ENCODE measurements at regions of chr21 and their contacts with region 1.

Region 1: DNA sequence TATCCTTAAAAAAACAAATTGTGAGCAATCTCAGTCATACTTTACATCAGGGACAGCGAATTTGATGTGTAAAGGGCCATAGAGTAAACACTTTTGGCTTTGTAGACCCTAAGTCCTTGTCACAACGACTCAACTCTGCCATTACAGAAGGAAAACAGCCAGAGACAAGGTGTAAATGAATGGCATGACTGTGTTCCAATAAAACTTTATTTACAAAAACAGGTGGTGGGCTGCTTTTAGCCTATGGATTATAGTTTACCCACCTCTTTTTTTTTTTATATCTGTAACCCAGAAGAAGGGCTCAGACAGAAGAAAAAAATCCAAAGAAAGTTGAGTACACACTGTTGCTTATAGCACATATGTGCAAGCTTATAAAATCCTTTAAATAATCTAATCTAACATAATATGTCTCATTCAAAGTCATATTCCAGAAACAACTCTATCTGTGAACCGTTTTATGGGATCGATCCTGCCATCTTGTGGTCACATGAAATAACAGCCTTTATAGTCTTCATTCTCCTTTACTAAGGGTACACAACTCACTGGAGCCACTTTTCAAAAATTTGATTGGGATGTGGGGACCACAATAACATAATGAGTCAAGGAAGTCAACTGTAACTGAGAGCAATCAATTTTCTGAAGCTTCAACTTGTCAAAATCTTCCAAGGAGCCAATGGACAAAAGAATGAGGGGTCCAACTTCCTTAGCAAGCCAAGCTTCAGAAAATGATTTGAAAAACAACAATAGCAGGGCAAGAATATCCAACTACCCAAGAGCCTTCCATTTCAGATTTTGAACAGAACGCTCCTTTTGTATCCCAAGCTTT is 142.2 kb upstream of the KRTAP19-8 start:
- DNase-seq: peak; percentile 43
- ATAC-seq: no peak
- H3K4me3 Mint-ChIP-seq: no peak overlapping the region
- H3K27ac Mint-ChIP-seq: no peak overlapping the region
- H3K4me1 Mint-ChIP-seq: peaks cover 59% of the 10 kb centered on the region
- H3K27me3 Mint-ChIP-seq: no peaks in the 10 kb centered on the region

Region 2: DNA sequence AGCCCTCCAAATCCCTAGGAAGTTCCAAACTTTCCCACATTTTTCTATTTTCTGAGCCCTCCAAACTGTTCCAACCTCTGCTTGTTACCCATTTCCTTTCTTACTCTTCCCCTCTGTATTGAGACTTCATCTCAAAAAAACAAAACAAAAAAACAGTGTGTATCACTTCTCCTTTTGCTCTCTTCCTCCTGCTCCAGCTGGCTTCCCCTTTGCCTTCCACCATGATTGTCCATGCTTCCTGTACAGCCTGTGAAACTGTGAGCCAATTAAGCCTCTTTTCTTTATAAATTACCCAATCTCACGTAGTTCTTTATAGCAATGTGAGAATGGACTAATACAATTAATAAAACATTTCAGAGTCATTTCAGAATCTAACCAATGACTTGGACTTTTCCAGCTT is 72.6 kb before region 1 on chr21:
- CTCF ChIA-PET with region 1: interaction called, 68 read pairs
- POLR2A ChIA-PET with region 1: no interaction called
- DNase-seq: no peak
- ATAC-seq: no peak
- H3K4me3 Mint-ChIP-seq: no peak overlapping the region
- H3K27ac Mint-ChIP-seq: no peak overlapping the region
- H3K4me1 Mint-ChIP-seq: peaks cover 15% of the 10 kb centered on the region
- H3K27me3 Mint-ChIP-seq: peaks cover 7% of the 10 kb centered on the region

Region 3: DNA sequence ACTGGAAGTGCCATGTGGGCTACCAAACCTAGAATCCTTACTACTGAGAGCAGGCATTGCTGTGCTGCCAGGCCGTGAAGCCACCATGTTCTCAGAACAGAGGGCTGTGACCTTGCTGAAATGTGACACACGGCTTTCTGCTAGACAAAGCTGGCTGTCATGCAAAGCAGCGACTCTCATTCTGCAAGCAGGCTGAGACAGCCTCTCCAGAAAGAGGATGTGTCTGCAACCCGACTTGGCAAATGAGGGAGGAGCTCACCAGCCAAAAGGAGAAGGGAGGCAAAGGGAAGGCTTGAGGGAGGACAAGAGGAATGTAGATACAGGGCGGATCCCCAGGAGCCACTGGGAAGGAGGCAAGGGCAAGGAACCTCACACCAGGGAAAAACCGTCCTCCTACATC is 56.5 kb before region 1 on chr21:
- CTCF ChIA-PET with region 1: interaction called, 42 read pairs
- POLR2A ChIA-PET with region 1: interaction called, 3 read pairs
- DNase-seq: no peak
- ATAC-seq: no peak
- H3K4me3 Mint-ChIP-seq: no peak overlapping the region
- H3K27ac Mint-ChIP-seq: no peak overlapping the region
- H3K4me1 Mint-ChIP-seq: no peaks in the 10 kb centered on the region
- H3K27me3 Mint-ChIP-seq: no peaks in the 10 kb centered on the region

Region 4: DNA sequence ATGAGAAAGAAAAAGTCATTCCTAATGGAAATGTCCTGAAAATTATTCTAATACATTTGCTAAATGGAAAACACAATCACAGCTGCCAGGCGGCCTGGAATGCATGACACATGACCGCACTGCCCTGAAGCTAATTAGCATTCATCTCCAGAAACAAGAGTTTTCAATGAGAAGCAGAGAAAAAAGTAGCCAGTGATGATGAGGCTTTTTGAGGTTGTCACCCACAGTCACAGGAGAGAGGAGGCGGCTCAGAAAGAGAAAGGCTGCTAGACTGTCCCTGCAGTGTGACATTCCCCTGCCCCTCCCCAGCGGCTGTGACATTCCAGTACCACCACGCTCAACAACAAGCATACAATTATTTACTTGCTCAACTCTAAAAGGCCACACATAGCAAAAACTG is 19.3 kb before region 1 on chr21:
- CTCF ChIA-PET with region 1: interaction called, 38 read pairs
- POLR2A ChIA-PET with region 1: interaction called, 3 read pairs
- DNase-seq: no peak
- ATAC-seq: no peak
- H3K4me3 Mint-ChIP-seq: no peak overlapping the region
- H3K27ac Mint-ChIP-seq: no peak overlapping the region
- H3K4me1 Mint-ChIP-seq: peaks cover 24% of the 10 kb centered on the region
- H3K27me3 Mint-ChIP-seq: no peaks in the 10 kb centered on the region

Region 5: DNA sequence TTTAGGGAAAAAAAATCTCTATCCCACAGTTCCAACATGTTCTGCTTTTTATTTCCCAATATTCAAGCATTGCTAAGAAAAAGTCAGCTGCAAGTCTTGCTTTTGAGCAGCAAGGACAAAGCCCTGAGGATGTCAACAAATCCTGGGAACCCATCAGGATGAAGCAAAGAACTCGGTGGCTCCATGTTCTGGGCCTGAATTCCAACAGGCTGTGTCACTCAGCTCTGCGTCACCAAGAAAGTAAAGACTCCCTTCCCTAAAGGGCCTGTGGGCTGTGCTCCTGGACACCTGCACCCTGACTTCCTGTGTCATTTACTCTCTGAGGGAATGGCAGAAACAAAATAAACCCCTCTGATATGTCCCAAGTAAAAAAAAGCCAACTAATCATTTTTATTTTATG is 68.1 kb after region 1 on chr21:
- CTCF ChIA-PET with region 1: no interaction called
- POLR2A ChIA-PET with region 1: no interaction called
- DNase-seq: no peak
- ATAC-seq: no peak
- H3K4me3 Mint-ChIP-seq: no peak overlapping the region
- H3K27ac Mint-ChIP-seq: no peak overlapping the region
- H3K4me1 Mint-ChIP-seq: no peaks in the 10 kb centered on the region
- H3K27me3 Mint-ChIP-seq: no peaks in the 10 kb centered on the region

Region 6: GRCh38 chr21:31558962-31559367 is 378.5 kb after region 1 on chr21:
- CTCF ChIA-PET with region 1: interaction called, 17 read pairs
- POLR2A ChIA-PET with region 1: interaction called, 7 read pairs
- DNase-seq: peak; percentile 95
- ATAC-seq: peak; percentile 92
- H3K4me3 Mint-ChIP-seq: peak overlapping the region; percentile 85
- H3K27ac Mint-ChIP-seq: no peak overlapping the region
- H3K4me1 Mint-ChIP-seq: peaks cover 45% of the 10 kb centered on the region
- H3K27me3 Mint-ChIP-seq: peaks cover 20% of the 10 kb centered on the region